Activated B cell treated with CpG ODN at 0.5 μM for 24 hours (primary cell): ENCODE measurements at regions of chr5 and their contacts with region 1.

Region 1: GRCh38 chr5:6480133-6481051 is 31.7 kb downstream of the UBE2QL1 start:
- DNase-seq: no peak
- ATAC-seq: no peak
- H3K4me3 Mint-ChIP-seq: no peak overlapping the region
- H3K27ac Mint-ChIP-seq: peak overlapping the region; percentile 53
- H3K4me1 Mint-ChIP-seq: peaks cover 36% of the 10 kb centered on the region
- H3K27me3 Mint-ChIP-seq: peaks cover 2% of the 10 kb centered on the region
- CTCF ChIP-seq: no peak

Region 2: DNA sequence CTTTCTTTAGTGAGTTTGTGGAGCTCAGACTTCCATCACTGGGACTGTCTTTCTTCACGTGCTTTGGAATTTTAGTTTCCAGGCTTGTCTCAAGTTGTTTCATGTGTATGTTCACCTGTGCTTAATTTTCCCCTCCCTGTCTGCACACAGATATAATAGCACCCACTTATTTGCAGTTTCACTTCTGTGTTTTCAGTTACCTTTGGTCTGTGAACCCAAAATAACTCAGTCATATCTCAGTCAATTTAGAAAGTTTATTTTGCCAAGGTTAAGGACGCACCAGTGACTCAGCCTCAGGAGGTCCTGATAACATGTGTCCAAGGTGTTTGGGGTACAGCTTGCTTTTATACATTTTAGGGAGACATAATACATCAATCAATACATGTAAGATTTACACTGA is 727.5 kb before region 1 on chr5:
- CTCF ChIA-PET with region 1: no interaction called
- POLR2A ChIA-PET with region 1: no interaction called
- intact Hi-C with region 1: loop called (anchors 5 kb)
- DNase-seq: no peak
- ATAC-seq: peak; percentile 56
- H3K4me3 Mint-ChIP-seq: peak overlapping the region; percentile 42
- H3K27ac Mint-ChIP-seq: peak overlapping the region; percentile 88
- H3K4me1 Mint-ChIP-seq: peaks cover 80% of the 10 kb centered on the region
- H3K27me3 Mint-ChIP-seq: no peaks in the 10 kb centered on the region
- CTCF ChIP-seq: no peak

Region 3: DNA sequence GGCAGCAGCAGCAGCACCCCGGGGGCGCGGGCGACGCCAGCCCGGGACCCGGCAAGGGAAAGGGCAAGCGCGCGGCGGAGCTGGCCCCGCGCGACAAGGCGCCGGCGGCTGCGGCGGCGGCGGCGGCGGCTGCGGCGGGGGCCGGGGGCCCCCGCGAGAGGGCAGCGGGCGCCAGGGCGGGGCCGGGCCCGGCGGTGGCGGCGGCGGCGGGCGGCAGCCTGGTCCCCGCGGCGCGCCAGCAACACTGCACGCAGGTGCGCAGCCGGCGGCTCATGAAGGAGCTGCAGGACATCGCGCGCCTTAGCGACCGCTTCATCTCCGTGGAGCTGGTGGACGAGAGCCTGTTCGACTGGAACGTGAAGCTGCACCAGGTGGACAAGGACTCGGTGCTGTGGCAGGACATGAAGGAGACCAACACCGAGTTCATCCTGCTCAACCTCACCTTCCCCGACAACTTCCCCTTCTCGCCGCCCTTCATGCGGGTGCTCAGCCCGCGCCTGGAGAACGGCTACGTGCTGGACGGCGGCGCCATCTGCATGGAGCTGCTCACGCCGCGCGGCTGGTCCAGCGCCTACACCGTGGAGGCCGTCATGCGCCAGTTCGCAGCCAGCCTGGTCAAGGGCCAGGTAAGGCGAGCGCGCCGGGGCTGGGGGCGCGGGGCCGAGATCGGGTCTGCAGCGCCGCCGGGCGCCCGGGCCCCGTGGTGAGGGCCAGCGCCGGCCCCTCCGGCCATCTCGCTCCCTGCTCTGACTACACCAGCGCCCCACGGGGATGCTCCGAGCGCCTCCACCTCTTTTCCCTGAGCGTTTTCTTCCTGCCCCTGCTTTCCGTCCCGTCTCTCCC is 31.5 kb before region 1 on chr5 and contains the start of gene UBE2QL1:
- CTCF ChIA-PET with region 1: no interaction called
- POLR2A ChIA-PET with region 1: no interaction called
- intact Hi-C with region 1: loop called (anchors 2 kb)
- DNase-seq: peak; percentile 27
- ATAC-seq: peak; percentile 78
- H3K4me3 Mint-ChIP-seq: peak within 1 kb of the TSS; percentile 83
- H3K27ac Mint-ChIP-seq: peak within 1 kb of the TSS; percentile 20
- H3K4me1 Mint-ChIP-seq: peaks cover 14% of the 10 kb centered on the region
- H3K27me3 Mint-ChIP-seq: peaks cover 40% of the 10 kb centered on the region
- CTCF ChIP-seq: no peak
- total RNA-seq, gene UBE2QL1: 1.2 and 1.3 TPM in 2 replicates

Region 4: GRCh38 chr5:6722015-6722414 is 241.6 kb after region 1 on chr5:
- CTCF ChIA-PET with region 1: no interaction called
- POLR2A ChIA-PET with region 1: no interaction called
- intact Hi-C with region 1: loop called (anchors 10 kb)
- DNase-seq: no peak
- ATAC-seq: peak; percentile 65
- H3K4me3 Mint-ChIP-seq: peak overlapping the region; percentile 83
- H3K27ac Mint-ChIP-seq: peak overlapping the region; percentile 94
- H3K4me1 Mint-ChIP-seq: peaks cover 89% of the 10 kb centered on the region
- H3K27me3 Mint-ChIP-seq: no peaks in the 10 kb centered on the region
- CTCF ChIP-seq: no peak